ENCODE measurements at regions of chr14 and their contacts with region 1.

Region 1: DNA sequence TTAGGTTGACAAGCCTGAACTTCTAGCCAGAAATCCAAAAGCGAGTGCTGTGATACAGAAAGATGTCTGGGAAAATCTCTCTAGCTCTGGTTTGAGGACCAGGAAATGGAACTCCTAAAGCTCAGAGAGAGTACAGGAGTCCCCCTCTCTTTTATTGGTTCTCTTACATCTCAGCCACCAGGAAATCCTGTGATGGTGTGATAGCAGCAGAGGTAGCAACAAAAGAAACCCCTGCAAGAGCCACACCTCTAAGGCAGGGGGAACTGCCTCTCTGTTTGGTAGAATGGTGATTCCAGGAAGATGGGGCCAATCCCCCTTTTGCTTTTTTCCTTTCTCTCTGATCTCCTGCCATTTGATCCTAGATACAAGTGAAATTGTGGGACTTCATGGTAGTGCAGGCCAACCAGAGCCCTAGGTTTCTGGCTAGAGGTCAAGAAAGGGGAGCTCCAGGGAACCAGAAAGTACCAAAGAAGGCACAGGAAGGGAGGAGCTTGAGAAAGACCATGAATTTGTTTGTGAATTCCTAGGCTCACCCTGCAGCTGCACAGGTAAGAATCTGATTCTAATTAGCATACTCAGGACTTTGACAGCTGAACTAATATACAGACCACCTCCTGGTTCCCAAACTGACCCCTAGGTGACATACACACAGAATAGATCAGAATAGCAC is 88.5 kb downstream of the PAPLN start:
- DNase-seq: no peak
- H3K4me3 Mint-ChIP-seq: no peak overlapping the region
- H3K27ac Mint-ChIP-seq: no peak overlapping the region
- H3K4me1 Mint-ChIP-seq: peaks cover 27% of the 10 kb centered on the region
- H3K27me3 Mint-ChIP-seq: no peaks in the 10 kb centered on the region

Region 2: GRCh38 chr14:73307261-73307660 is 18.5 kb before region 1 on chr14:
- intact Hi-C with region 1: loop called (anchors 2 kb)
- DNase-seq: no peak
- H3K4me3 Mint-ChIP-seq: no peak overlapping the region
- H3K27ac Mint-ChIP-seq: no peak overlapping the region
- H3K4me1 Mint-ChIP-seq: peaks cover 6% of the 10 kb centered on the region
- H3K27me3 Mint-ChIP-seq: no peaks in the 10 kb centered on the region

Region 3: GRCh38 chr14:73365727-73366126 is 40.0 kb after region 1 on chr14:
- intact Hi-C with region 1: no loop called
- DNase-seq: no peak
- H3K4me3 Mint-ChIP-seq: no peak overlapping the region
- H3K27ac Mint-ChIP-seq: no peak overlapping the region
- H3K4me1 Mint-ChIP-seq: no peaks in the 10 kb centered on the region
- H3K27me3 Mint-ChIP-seq: no peaks in the 10 kb centered on the region